Activated CD4-positive, alpha-beta T cell treated with anti-CD3 and anti-CD28 coated beads for 36 hours (primary cell): ENCODE measurements at regions of chr6 and their contacts with region 1.

Region 1: GRCh38 chr6:30814136-30815040 is 69.9 kb upstream of the DDR1 start:
- DNase-seq: peak; percentile 79
- ATAC-seq: peak; percentile 40
- H3K4me3 Mint-ChIP-seq: peak overlapping the region; percentile 38
- H3K27ac Mint-ChIP-seq: peak overlapping the region; percentile 96
- H3K4me1 Mint-ChIP-seq: peaks cover 91% of the 10 kb centered on the region
- H3K27me3 Mint-ChIP-seq: no peaks in the 10 kb centered on the region

Region 2: DNA sequence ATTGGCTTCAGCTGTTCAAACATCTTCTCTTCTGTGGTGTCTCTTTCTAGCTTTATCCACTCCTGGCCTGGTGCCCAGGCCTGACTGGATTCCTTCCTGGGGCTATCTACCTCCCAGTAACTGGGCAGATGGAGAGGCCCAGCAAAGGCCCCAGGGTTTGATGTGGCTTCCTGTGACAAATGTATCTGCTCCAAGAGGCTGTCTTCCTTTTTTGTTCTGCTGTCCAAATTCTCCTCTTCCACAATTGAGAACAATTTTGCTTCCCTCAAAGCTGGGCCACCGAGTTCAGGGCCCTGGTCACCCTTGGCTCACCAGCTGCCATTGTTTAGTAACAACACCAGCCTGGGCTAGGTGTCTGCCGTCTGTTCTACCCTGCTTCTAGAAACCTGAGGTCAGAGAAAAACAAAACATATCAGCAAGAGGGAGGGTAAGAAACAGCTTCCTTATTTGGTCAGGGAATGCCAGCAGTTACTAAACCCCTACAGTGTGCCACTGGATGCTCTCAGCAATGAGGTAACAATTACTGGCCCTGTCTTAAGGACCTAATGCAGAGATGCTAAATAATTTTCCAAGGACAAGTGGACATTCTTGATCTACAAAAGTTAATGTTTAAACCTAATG is 1137.3 kb before region 1 on chr6:
- CTCF ChIA-PET with region 1: no interaction called
- POLR2A ChIA-PET with region 1: no interaction called
- intact Hi-C with region 1: no loop called
- DNase-seq: peak; percentile 5
- ATAC-seq: no peak
- H3K4me3 Mint-ChIP-seq: no peak overlapping the region
- H3K27ac Mint-ChIP-seq: no peak overlapping the region
- H3K4me1 Mint-ChIP-seq: peaks cover 8% of the 10 kb centered on the region
- H3K27me3 Mint-ChIP-seq: no peaks in the 10 kb centered on the region

Region 3: DNA sequence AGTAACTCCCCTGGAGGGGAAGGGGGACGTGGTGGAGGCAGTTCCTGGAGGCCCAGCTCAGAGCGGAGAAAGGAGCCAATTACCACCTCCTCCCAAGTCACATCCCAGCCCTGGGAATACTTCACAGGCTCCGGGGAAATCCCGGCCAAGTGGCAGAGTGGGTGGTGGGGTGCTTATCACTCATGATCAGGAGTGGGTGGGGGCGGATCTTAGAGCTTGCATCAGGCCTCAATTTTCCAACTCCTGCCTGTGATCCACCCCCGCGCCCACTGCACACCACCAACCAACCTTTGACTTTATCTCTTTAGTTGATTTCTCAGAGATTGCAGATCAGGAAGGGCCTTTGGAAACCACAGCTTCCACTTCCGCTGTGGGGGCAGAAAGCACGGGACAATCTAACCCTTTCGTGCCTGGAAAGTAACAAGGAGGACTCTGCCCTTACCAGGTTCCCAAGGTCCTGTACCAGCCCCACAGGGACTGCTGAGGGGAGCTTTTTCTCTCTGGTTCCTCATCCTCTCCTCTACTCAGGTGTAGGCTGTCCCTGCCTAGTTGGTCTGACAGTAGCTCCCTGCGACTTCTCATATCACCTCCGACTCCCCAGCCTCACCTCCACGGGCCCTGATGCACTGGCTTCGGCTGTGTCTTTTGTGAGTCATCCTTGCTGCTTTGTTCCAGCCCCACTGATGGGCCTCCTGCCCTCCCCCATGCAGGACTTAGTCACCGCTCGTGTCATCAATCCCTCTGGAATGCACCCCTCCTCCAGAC is 45.1 kb before region 1 on chr6:
- CTCF ChIA-PET with region 1: interaction called, 17 read pairs
- POLR2A ChIA-PET with region 1: interaction called, 20 read pairs
- intact Hi-C with region 1: loop called (anchors 1 kb)
- DNase-seq: peak; percentile 90
- ATAC-seq: peak; percentile 75
- H3K4me3 Mint-ChIP-seq: peak overlapping the region; percentile 63
- H3K27ac Mint-ChIP-seq: peak overlapping the region; percentile 98
- H3K4me1 Mint-ChIP-seq: peaks cover 86% of the 10 kb centered on the region
- H3K27me3 Mint-ChIP-seq: no peaks in the 10 kb centered on the region

Region 4: GRCh38 chr6:30787954-30788353 is 26.4 kb before region 1 on chr6:
- CTCF ChIA-PET with region 1: interaction called, 10 read pairs
- POLR2A ChIA-PET with region 1: interaction called, 11 read pairs
- intact Hi-C with region 1: loop called (anchors 1 kb)
- DNase-seq: peak; percentile 75
- ATAC-seq: peak; percentile 73
- H3K4me3 Mint-ChIP-seq: peak overlapping the region; percentile 59
- H3K27ac Mint-ChIP-seq: peak overlapping the region; percentile 96
- H3K4me1 Mint-ChIP-seq: peaks cover 67% of the 10 kb centered on the region
- H3K27me3 Mint-ChIP-seq: no peaks in the 10 kb centered on the region

Region 5: GRCh38 chr6:30793521-30794194 is 20.7 kb before region 1 on chr6:
- CTCF ChIA-PET with region 1: interaction called, 10 read pairs
- POLR2A ChIA-PET with region 1: interaction called, 11 read pairs
- intact Hi-C with region 1: loop called (anchors 1 kb)
- DNase-seq: no peak
- ATAC-seq: peak; percentile 78
- H3K4me3 Mint-ChIP-seq: peak overlapping the region; percentile 50
- H3K27ac Mint-ChIP-seq: peak overlapping the region; percentile 94
- H3K4me1 Mint-ChIP-seq: peaks cover 63% of the 10 kb centered on the region
- H3K27me3 Mint-ChIP-seq: no peaks in the 10 kb centered on the region